ENCODE measurements at regions of chr14 and their contacts with region 1.

Region 1: DNA sequence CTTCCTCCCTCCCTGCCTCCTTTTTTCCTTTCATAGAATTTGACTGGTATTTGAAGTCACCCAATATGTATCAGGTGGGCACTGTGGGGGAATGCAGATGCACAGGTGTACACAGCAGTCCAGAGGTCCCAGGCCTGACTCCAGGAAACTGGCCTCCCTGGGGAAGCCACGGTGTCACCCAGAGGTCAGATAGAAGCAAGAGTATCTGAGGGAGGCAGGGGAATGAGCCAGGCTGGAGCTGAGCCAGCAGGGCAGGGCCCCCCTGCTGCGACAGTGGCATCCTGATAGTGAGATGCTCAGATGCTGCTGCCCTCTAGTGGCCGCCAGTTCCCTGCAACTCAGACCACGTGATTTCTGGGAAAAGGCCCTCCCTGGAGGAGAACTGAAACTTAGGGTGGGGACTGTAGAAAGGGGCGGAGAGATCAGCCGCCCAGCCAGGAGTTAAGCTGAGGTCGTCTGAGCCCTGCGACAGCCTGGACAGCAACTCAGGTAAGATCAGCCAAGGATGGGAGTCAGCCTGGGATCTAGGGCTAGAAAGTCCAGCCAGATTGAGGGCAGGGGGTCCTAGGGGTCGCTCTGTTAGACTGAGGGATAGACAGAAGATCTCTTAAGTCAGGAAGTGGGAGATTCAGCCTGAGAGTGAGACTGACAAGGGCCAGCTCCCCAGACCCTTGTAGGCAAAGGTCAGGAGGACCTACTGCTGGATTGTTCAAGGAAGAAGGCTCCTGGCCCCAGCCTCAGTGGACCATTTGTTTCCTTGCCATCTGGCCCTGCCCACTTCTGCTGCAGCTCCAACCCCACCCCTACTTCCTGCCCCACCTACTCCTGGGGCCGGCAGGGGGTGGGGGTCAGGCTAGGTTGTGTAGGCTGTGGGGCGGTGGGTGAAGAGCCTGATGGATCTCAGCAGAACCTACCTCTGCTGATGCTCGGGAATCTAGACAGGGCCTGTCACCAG is at the start of gene IRF9:
- DNase-seq: peak; percentile 98
- ATAC-seq: peak; percentile 89
- H3K4me3 Mint-ChIP-seq: peak within 1 kb of the TSS; percentile 84
- H3K27ac Mint-ChIP-seq: peak within 1 kb of the TSS; percentile 97
- H3K4me1 Mint-ChIP-seq: peaks cover 35% of the 10 kb centered on the region
- H3K27me3 Mint-ChIP-seq: no peaks in the 10 kb centered on the region
- total RNA-seq, gene IRF9: 172 to 209 TPM

Region 2: DNA sequence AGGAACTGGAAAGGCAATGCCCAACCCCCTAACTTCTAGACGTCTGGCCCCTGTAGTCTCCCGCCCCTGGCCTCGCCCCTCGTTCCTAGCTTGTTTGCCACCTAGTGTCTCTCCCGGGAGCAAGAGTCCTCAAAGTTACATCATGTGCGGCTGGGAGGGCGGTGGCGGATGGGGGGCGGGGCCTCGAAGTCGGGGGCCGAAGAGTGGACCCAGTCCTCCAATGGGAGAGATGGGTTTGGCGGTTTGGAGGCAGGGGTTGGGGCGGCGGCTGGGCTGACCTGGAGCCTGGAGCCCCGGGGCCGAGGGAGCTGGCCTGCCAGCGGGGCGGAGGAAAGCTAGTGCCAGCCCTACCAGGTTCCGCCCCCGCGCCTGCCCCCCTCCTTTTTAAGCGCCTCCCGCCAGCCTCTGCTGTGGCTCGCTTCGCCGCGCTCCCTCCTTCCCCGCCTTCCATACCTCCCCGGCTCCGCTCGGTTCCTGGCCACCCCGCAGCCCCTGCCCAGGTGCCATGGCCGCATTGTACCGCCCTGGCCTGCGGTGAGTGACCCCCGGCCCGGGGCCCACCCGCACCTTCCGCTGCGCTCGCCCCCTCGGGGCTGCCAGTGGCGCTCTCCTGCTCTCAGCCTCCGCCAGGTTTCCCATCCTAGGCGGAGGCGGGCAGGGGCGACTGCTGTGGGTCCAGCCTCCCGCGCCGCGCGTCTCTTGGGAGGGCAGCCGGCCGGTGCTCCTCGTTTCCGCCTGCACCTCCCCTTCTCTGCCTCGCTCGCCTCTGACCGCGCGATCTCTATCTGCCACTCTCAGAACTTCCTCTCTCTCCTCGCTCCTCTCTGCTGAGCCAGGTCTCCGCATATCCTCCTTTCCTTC is 67.0 kb before region 1 on chr14 and contains the start of gene PCK2:
- CTCF ChIA-PET with region 1: interaction called, 3 read pairs
- POLR2A ChIA-PET with region 1: interaction called, 7 read pairs
- intact Hi-C with region 1: loop called in 1 of 2 experiments (anchors 1 kb)
- DNase-seq: peak; percentile 95
- ATAC-seq: peak; percentile 87
- H3K4me3 Mint-ChIP-seq: peak within 1 kb of the TSS; percentile 85
- H3K27ac Mint-ChIP-seq: peak within 1 kb of the TSS; percentile 95
- H3K4me1 Mint-ChIP-seq: peaks cover 26% of the 10 kb centered on the region
- H3K27me3 Mint-ChIP-seq: no peaks in the 10 kb centered on the region
- total RNA-seq, gene PCK2: 101 to 115 TPM

Region 3: DNA sequence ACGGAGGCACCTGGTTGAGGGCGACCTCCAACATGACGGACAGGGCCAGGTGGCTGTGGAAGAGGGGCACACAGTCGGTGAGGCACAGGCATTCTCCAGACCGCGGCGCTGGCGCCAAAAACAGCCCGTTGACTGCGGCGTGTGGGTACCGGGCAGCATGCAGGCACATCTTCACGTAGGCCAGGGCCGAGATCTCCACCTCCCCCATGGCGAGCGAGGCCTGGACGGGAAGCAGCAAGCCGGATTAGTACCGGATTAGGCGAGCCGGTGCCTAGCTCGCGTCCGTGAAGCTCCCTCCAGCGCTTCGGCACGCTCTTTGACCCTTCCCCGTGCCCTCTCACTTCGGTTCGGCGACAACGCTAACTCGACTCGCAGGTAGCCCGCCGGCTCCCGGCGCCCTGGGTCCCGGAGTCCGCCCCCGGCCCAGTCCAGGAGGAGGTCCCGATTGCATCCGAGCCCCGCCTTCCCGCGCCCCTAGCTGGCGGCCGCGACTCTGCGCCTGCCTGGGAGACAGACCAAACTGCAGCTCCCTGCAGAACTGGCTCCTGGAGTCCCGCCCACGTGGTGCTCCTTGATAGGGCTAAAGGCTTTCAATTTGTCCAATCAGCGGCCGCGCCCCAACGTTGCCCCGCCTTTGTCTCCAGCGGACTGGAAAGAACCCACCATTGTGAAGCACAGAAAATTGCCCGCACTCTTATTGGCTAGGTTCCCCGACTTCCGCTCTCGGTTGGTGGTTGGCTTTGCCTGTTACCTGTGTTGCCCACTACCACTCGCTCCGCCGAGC is 19.8 kb before region 1 on chr14 and contains the start of gene EMC9:
- CTCF ChIA-PET with region 1: interaction called, 43 read pairs
- POLR2A ChIA-PET with region 1: interaction called, 36 read pairs
- intact Hi-C with region 1: loop called (anchors 1 kb)
- DNase-seq: peak; percentile 100
- ATAC-seq: peak; percentile 87
- H3K4me3 Mint-ChIP-seq: peak within 1 kb of the TSS; percentile 88
- H3K27ac Mint-ChIP-seq: peak within 1 kb of the TSS; percentile 97
- H3K4me1 Mint-ChIP-seq: peaks cover 66% of the 10 kb centered on the region
- H3K27me3 Mint-ChIP-seq: no peaks in the 10 kb centered on the region
- total RNA-seq, gene EMC9: 36.9 to 46.7 TPM

Region 4: GRCh38 chr14:24188251-24189058 is 27.3 kb after region 1 on chr14 and contains the start of gene IPO4:
- CTCF ChIA-PET with region 1: interaction called, 14 read pairs
- POLR2A ChIA-PET with region 1: interaction called, 10 read pairs
- intact Hi-C with region 1: loop called (anchors 1 kb)
- DNase-seq: peak; percentile 97
- ATAC-seq: peak; percentile 92
- H3K4me3 Mint-ChIP-seq: peak within 1 kb of the TSS; percentile 89
- H3K27ac Mint-ChIP-seq: peak within 1 kb of the TSS; percentile 83
- H3K4me1 Mint-ChIP-seq: peaks cover 40% of the 10 kb centered on the region
- H3K27me3 Mint-ChIP-seq: no peaks in the 10 kb centered on the region
- total RNA-seq, gene IPO4: 73.4 to 73.7 TPM

Region 5: GRCh38 chr14:24232121-24232644 is 71.1 kb after region 1 on chr14 and contains the start of gene NEDD8:
- CTCF ChIA-PET with region 1: interaction called, 4 read pairs
- POLR2A ChIA-PET with region 1: no interaction called
- intact Hi-C with region 1: loop called in 1 of 2 experiments (anchors 1 kb)
- DNase-seq: peak; percentile 96
- ATAC-seq: peak; percentile 91
- H3K4me3 Mint-ChIP-seq: peak within 1 kb of the TSS; percentile 78
- H3K27ac Mint-ChIP-seq: peak within 1 kb of the TSS; percentile 89
- H3K4me1 Mint-ChIP-seq: peaks cover 58% of the 10 kb centered on the region
- H3K27me3 Mint-ChIP-seq: no peaks in the 10 kb centered on the region
- total RNA-seq, gene NEDD8: 187 to 217 TPM

Region 6: GRCh38 chr14:24299255-24300195 is 138.4 kb after region 1 on chr14 and contains the starts of genes DHRS1 and NOP9:
- CTCF ChIA-PET with region 1: interaction called, 4 read pairs
- POLR2A ChIA-PET with region 1: no interaction called
- intact Hi-C with region 1: loop called in 1 of 2 experiments (anchors 1 kb)
- DNase-seq: peak; percentile 96
- ATAC-seq: peak; percentile 67
- H3K4me3 Mint-ChIP-seq: peak within 1 kb of the TSS; percentile 91
- H3K27ac Mint-ChIP-seq: peak within 1 kb of the TSS; percentile 77
- H3K4me1 Mint-ChIP-seq: peaks cover 51% of the 10 kb centered on the region
- H3K27me3 Mint-ChIP-seq: no peaks in the 10 kb centered on the region
- total RNA-seq, gene DHRS1: 11.7 to 14.6 TPM
- total RNA-seq, gene NOP9: 24.4 to 32.5 TPM

Region 7: GRCh38 chr14:24578558-24578957 is 417.4 kb after region 1 on chr14:
- CTCF ChIA-PET with region 1: no interaction called
- POLR2A ChIA-PET with region 1: no interaction called
- intact Hi-C with region 1: no loop called
- DNase-seq: no peak
- ATAC-seq: no peak
- H3K4me3 Mint-ChIP-seq: no peak overlapping the region
- H3K27ac Mint-ChIP-seq: no peak overlapping the region
- H3K4me1 Mint-ChIP-seq: no peaks in the 10 kb centered on the region
- H3K27me3 Mint-ChIP-seq: peaks cover 2% of the 10 kb centered on the region

Measured in activated CD4-positive, alpha-beta T cell treated with anti-CD3 and anti-CD28 coated beads for 36 hours (primary cell).